ENCODE measurements at regions of chr12 and their contacts with region 1.

Region 1: GRCh38 chr12:89019408-89020120 is 332.7 kb downstream of the DUSP6 start:
- DNase-seq: peak; percentile 90
- ATAC-seq: peak; percentile 98
- H3K4me3 Mint-ChIP-seq: no peak overlapping the region
- H3K27ac Mint-ChIP-seq: no peak overlapping the region
- H3K4me1 Mint-ChIP-seq: peaks cover 40% of the 10 kb centered on the region
- H3K27me3 Mint-ChIP-seq: peaks cover 2% of the 10 kb centered on the region

Region 2: GRCh38 chr12:88993651-88994050 is 25.9 kb before region 1 on chr12:
- CTCF ChIA-PET with region 1: no interaction called
- POLR2A ChIA-PET with region 1: no interaction called
- DNase-seq: no peak
- ATAC-seq: no peak
- H3K4me3 Mint-ChIP-seq: no peak overlapping the region
- H3K27ac Mint-ChIP-seq: no peak overlapping the region
- H3K4me1 Mint-ChIP-seq: no peaks in the 10 kb centered on the region
- H3K27me3 Mint-ChIP-seq: peaks cover 28% of the 10 kb centered on the region

Region 3: GRCh38 chr12:89040146-89040964 is 20.8 kb after region 1 on chr12:
- CTCF ChIA-PET with region 1: interaction called, 166 read pairs
- POLR2A ChIA-PET with region 1: interaction called, 13 read pairs
- DNase-seq: peak; percentile 93
- ATAC-seq: peak; percentile 98
- H3K4me3 Mint-ChIP-seq: peak overlapping the region; percentile 37
- H3K27ac Mint-ChIP-seq: peak overlapping the region; percentile 91
- H3K4me1 Mint-ChIP-seq: peaks cover 67% of the 10 kb centered on the region
- H3K27me3 Mint-ChIP-seq: no peaks in the 10 kb centered on the region

Region 4: GRCh38 chr12:89244536-89244935 is 225.0 kb after region 1 on chr12:
- CTCF ChIA-PET with region 1: interaction called, 32 read pairs
- POLR2A ChIA-PET with region 1: no interaction called
- DNase-seq: peak; percentile 65
- ATAC-seq: peak; percentile 74
- H3K4me3 Mint-ChIP-seq: peak overlapping the region; percentile 66
- H3K27ac Mint-ChIP-seq: peak overlapping the region; percentile 86
- H3K4me1 Mint-ChIP-seq: peaks cover 71% of the 10 kb centered on the region
- H3K27me3 Mint-ChIP-seq: no peaks in the 10 kb centered on the region

Region 5: GRCh38 chr12:89427508-89428156 is 408.1 kb after region 1 on chr12:
- CTCF ChIA-PET with region 1: interaction called, 11 read pairs
- POLR2A ChIA-PET with region 1: no interaction called
- DNase-seq: peak; percentile 33
- ATAC-seq: peak; percentile 78
- H3K4me3 Mint-ChIP-seq: peak overlapping the region; percentile 30
- H3K27ac Mint-ChIP-seq: peak overlapping the region; percentile 79
- H3K4me1 Mint-ChIP-seq: peaks cover 40% of the 10 kb centered on the region
- H3K27me3 Mint-ChIP-seq: no peaks in the 10 kb centered on the region

Region 6: GRCh38 chr12:89470741-89471509 is 451.4 kb after region 1 on chr12:
- CTCF ChIA-PET with region 1: interaction called, 137 read pairs
- POLR2A ChIA-PET with region 1: no interaction called
- DNase-seq: no peak
- ATAC-seq: peak; percentile 45
- H3K4me3 Mint-ChIP-seq: peak overlapping the region; percentile 26
- H3K27ac Mint-ChIP-seq: peak overlapping the region; percentile 78
- H3K4me1 Mint-ChIP-seq: peaks cover 77% of the 10 kb centered on the region
- H3K27me3 Mint-ChIP-seq: no peaks in the 10 kb centered on the region

Measured in activated CD8-positive, alpha-beta T cell treated with anti-CD3 and anti-CD28 coated beads, Interleukin-2, amount 10 ng/mL, durations not matched to agents 7 days and 5 days (primary cell).